PC-9 (cell line): ENCODE measurements at regions of chr16 and their contacts with region 1.

Region 1: DNA sequence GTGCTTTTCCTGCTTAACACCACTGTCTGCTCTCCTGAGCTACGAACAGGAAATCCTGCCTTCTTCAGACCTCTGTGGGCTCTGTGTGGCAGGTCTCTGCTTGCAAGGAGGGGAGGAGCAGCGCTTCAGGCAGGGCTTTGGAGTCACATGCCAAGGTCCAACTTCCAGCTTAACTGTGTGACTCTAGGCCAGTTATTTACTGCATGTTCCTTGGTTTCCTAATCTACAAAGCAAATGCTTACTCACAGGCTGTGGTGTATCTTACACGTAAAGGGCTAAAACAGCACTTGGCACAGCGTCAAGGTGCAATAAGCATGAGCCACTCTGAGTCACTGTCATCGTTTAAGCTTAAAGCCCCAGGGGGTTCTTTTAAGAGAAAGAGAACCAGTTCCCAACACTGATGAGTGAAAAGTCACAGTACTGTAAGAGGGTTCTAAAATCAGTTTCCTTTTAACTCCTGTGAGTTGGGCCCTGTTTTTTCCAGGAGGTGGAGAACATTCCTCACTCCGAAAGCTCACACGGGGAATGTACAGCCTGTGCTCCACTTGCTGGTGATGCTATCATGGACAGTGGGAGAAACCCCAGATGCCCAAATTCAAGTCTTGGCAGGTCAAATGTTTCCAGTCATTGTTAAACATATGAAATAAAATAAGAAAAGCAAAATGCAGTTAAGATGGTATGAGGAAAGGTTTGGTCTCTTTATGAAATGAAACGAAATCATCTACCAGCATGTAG is 54.1 kb upstream of the BCAR1 start:
- DNase-seq: peak; percentile 85 to 100
- H3K4me3 ChIP-seq: peak overlapping the region; percentile 25; the same call in 1 of the 2 replicates
- H3K27ac ChIP-seq: peak overlapping the region; percentile 93
- H3K4me1 ChIP-seq: peaks cover 38% of the 10 kb centered on the region
- H3K27me3 ChIP-seq: no peaks in the 10 kb centered on the region
- CTCF ChIP-seq: no peak

Region 2: GRCh38 chr16:75234856-75235696 is 70.5 kb before region 1 on chr16:
- CTCF ChIA-PET with region 1: interaction called, 4 read pairs
- POLR2A ChIA-PET with region 1: interaction called, 18 read pairs
- intact Hi-C with region 1: loop called (anchors 5 kb)
- DNase-seq: no peak
- H3K4me3 ChIP-seq: no peak overlapping the region
- H3K27ac ChIP-seq: no peak overlapping the region
- H3K4me1 ChIP-seq: peaks cover 12% of the 10 kb centered on the region
- H3K27me3 ChIP-seq: no peaks in the 10 kb centered on the region
- CTCF ChIP-seq: no peak

Region 3: DNA sequence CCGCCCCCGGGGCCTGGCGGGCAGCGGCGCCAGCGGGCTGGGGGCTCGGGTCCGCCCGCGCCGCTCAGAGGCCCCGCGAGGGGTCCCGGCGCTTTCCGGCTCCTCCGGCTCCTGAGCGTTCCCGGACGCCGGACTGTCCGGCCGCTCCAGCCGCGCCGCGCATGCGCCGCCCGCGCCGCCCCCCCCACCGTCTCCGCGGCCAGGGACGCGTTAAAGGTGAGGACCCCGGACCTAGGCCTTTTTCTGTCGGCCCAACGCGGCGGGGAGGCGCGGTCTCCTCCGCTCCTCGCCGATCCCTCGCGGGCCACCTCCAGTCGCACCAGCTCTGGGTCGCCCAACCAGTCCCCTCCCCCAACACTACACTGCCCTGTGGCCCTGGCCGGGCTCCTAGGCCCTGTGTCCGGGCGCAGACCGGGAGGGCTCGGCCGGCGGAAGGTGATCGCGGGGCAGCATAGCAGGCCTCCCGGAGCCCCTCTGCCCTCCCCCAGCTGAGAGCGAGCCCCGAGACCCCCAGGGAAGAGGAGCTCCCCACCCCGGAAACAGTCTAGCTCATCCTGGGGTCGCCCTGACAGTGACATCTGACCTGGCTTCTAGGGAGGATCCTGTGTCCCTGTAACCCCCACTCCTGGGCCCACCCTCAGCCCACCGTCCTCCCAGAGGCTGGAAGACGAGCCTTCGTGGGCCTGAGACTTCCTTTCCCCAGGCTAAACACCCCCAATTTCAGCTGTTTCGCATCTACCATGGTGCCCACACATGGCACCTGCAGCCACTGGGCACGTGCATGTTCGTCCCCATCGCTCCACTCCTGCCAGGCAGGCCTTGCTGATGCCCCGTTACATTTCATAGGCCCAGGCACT is 39.5 kb before region 1 on chr16:
- CTCF ChIA-PET with region 1: no interaction called
- POLR2A ChIA-PET with region 1: interaction called, 5 read pairs
- intact Hi-C with region 1: loop called (anchors 1 kb)
- DNase-seq: peak; percentile 76 to 91
- H3K4me3 ChIP-seq: peak overlapping the region; percentile 99
- H3K27ac ChIP-seq: peak overlapping the region; percentile 58
- H3K4me1 ChIP-seq: peaks cover 43% of the 10 kb centered on the region
- H3K27me3 ChIP-seq: no peaks in the 10 kb centered on the region
- CTCF ChIP-seq: no peak

Region 4: GRCh38 chr16:75279305-75279704 is 26.2 kb before region 1 on chr16:
- CTCF ChIA-PET with region 1: interaction called, 3 read pairs
- POLR2A ChIA-PET with region 1: no interaction called
- intact Hi-C with region 1: loop called (anchors 1 kb)
- DNase-seq: peak in 1 of 2 experiments; percentile 30
- H3K4me3 ChIP-seq: no peak overlapping the region; the same call in 1 of the 2 replicates
- H3K27ac ChIP-seq: peak overlapping the region; percentile 76
- H3K4me1 ChIP-seq: peaks cover 32% of the 10 kb centered on the region
- H3K27me3 ChIP-seq: no peaks in the 10 kb centered on the region
- CTCF ChIP-seq: no peak

Region 5: GRCh38 chr16:75377729-75378386 is 72.3 kb after region 1 on chr16:
- CTCF ChIA-PET with region 1: no interaction called
- POLR2A ChIA-PET with region 1: no interaction called
- intact Hi-C with region 1: loop called (anchors 1 kb)
- DNase-seq: peak; percentile 49 to 98
- H3K4me3 ChIP-seq: peak overlapping the region; percentile 1; the same call in 1 of the 2 replicates
- H3K27ac ChIP-seq: peak overlapping the region; percentile 54
- H3K4me1 ChIP-seq: peaks cover 51% of the 10 kb centered on the region
- H3K27me3 ChIP-seq: no peaks in the 10 kb centered on the region
- CTCF ChIP-seq: no peak